SK-N-SH (cell line): ENCODE measurements at regions of chr13 and their contacts with region 1.

Region 1: GRCh38 chr13:99656092-99656745 is 154.9 kb downstream of the TM9SF2 start:
- DNase-seq: peak; percentile 79
- H3K4me3 ChIP-seq: peak overlapping the region in 1 of 2 experiments; percentile 22; a peak in 1 of 4 replicates
- H3K27ac ChIP-seq: no peak overlapping the region
- H3K4me1 ChIP-seq: peaks cover 0 to 5% of the 10 kb centered on the region in 2 experiments; a peak in 3 of 4 replicates
- H3K27me3 ChIP-seq: no peaks in the 10 kb centered on the region
- CTCF ChIP-seq: peak; percentile 91
- EP300 ChIP-seq: no peak
- RAD21 ChIP-seq: peak; percentile 94

Region 2: DNA sequence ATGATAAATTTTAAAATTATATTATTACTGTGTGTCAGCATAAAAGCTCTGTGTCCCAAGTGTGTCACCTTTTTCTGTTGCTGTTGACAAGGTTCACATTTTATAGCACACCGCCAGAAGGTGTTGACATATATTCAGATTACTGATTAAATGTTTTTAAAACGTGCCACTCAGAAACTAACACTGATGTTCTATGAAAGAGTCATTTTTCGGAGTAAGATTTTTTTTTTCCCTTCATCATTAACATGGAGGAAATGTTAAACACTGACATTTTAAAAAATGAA is 42.5 kb after region 1 on chr13:
- CTCF ChIA-PET with region 1: no interaction called
- POLR2A ChIA-PET with region 1: no interaction called
- DNase-seq: no peak
- H3K4me3 ChIP-seq: no peak overlapping the region
- H3K27ac ChIP-seq: no peak overlapping the region
- H3K4me1 ChIP-seq: no peaks in the 10 kb centered on the region
- H3K27me3 ChIP-seq: no peaks in the 10 kb centered on the region
- CTCF ChIP-seq: no peak
- EP300 ChIP-seq: no peak
- RAD21 ChIP-seq: no peak

Region 3: DNA sequence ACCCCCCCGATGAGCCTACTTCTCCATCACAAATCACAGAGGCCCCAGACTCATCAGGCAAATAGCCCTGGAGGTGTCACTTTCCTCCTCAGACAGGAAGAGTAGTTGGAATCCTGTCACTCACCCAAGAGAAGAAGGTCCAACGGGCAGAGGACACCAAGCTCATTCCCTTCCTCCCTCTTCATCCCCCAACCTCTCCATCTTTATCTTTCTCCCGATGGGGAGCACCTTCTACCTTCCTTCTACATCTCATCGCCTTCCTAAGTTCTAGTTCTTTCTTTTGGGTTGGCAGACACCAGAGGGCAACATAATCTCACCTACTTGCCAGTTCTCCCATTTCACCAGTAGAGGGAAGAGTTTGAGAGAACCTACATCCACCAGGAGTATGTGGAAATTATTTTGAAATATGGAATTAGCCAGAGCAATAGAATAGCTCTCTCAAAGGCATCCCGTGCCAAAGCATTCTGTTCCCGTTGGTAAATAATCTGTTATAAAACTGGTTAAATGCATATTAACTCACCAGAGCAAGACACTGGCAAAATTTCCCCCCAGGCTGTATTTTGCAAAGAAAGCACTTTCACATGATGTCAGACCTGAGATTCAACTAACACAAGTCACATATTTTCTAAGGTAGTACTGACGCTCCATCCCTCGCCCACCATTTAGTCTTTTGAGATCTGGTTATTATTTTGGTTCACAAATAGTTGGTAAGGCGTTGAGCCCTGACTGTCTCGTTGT is 260.3 kb after region 1 on chr13:
- CTCF ChIA-PET with region 1: interaction called, 19 read pairs
- POLR2A ChIA-PET with region 1: no interaction called
- DNase-seq: peak; percentile 73
- H3K4me3 ChIP-seq: no peak overlapping the region
- H3K27ac ChIP-seq: no peak overlapping the region
- H3K4me1 ChIP-seq: no peaks in the 10 kb centered on the region
- H3K27me3 ChIP-seq: peaks cover 58% of the 10 kb centered on the region
- CTCF ChIP-seq: peak; percentile 92
- EP300 ChIP-seq: no peak
- RAD21 ChIP-seq: peak; percentile 78

Region 4: DNA sequence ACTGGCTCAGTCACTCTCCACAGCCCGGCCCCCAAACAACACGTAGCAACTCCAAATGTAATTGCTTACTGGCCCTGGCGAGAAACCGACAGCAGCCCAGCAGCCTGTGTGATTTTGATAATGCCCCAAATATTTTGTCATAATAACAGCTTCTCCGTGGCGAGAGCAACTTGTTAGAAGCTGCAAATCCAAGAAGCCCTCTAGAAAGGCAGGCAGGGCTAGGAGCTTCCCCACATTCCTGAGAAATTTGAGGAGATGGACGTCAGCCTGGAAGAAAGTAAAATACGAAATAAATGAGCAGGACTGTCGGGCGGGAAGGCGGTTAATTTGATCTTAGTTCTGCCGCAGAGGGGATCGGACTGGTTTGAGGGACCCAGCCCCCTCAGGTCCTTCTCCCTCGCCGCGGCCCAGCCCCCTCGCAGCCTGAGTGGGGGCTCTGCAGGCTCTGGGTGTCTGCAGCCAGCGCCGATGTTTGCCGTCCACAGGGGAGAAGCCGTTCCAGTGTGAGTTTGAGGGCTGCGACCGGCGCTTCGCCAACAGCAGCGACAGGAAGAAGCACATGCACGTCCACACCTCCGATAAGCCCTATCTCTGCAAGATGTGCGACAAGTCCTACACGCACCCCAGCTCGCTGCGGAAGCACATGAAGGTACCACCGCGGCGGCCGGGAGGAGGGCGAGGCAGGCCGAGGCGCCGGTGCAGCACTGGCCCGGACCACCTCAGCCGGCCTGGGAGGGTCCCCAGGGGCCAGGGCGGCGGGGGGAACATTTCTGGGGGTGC is 328.4 kb after region 1 on chr13:
- CTCF ChIA-PET with region 1: interaction called, 24 read pairs
- POLR2A ChIA-PET with region 1: no interaction called
- DNase-seq: peak; percentile 55
- H3K4me3 ChIP-seq: no peak overlapping the region
- H3K27ac ChIP-seq: no peak overlapping the region
- H3K4me1 ChIP-seq: no peaks in the 10 kb centered on the region; a peak in 1 of 4 replicates
- H3K27me3 ChIP-seq: peaks cover 83% of the 10 kb centered on the region
- CTCF ChIP-seq: no peak
- EP300 ChIP-seq: no peak
- RAD21 ChIP-seq: no peak

Region 5: DNA sequence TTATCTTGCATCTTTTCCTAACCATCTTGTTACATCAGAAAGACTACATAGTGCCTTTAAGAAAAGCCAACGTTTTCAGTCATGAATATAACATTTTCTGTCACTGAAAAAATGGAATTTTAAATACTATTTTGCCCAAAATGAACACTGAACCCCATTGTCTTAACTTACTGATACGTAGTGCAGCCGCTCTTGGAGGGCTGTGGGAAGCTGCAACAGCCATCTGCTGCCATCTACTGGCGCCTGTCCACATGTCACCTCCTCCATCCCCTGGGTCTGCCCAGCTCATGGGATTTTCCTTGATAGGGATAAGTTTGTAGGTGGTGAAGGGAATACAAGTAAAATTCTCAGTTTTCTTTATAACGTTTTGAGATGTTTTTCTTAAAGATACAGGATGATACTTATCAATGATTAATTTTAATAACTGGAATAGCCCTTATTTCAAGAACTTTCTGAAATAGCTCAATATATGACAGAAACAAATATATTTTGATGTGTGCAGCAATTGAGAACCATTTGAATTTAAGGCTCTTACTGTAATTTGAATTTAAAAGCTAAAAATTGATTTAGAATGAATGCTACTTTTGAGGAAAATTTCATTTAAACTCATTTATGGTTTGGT is 858.7 kb after region 1 on chr13:
- CTCF ChIA-PET with region 1: interaction called, 107 read pairs
- POLR2A ChIA-PET with region 1: no interaction called
- DNase-seq: peak; percentile 92
- H3K4me3 ChIP-seq: no peak overlapping the region; a peak in 1 of 4 replicates
- H3K27ac ChIP-seq: no peak overlapping the region
- H3K4me1 ChIP-seq: peaks cover 14 to 19% of the 10 kb centered on the region in 2 experiments; a peak in 3 of 4 replicates
- H3K27me3 ChIP-seq: no peaks in the 10 kb centered on the region
- CTCF ChIP-seq: peak; percentile 99
- EP300 ChIP-seq: no peak
- RAD21 ChIP-seq: peak; percentile 99